ENCODE measurements at regions of chr1 and their contacts with region 1.

Region 1: GRCh38 chr1:47738560-47739182 is 258.5 kb downstream of the TRABD2B start:
- DNase-seq: no peak
- H3K4me3 ChIP-seq: no peak overlapping the region
- H3K27ac ChIP-seq: no peak overlapping the region
- H3K4me1 ChIP-seq: peaks cover 0 to 7% (median 3%) of the 10 kb centered on the region in 4 donors
- H3K27me3 ChIP-seq: peaks cover 0 to 15% (median 3%) of the 10 kb centered on the region in 4 donors
- CTCF ChIP-seq: peak; percentile 67 to 84 (median 77)
- EP300 ChIP-seq: no peak
- POLR2A ChIP-seq: no peak

Region 2: GRCh38 chr1:47997289-47998200 is 258.9 kb after region 1 on chr1 and contains the start of gene TRABD2B:
- intact Hi-C with region 1: loop called (anchors 5 kb)
- DNase-seq: peak; percentile 95
- H3K4me3 ChIP-seq: peak within 1 kb of the TSS; percentile 62 to 90 (median 82)
- H3K27ac ChIP-seq: peak within 1 kb of the TSS; percentile 84 to 87 (median 86)
- H3K4me1 ChIP-seq: peaks cover 9 to 51% (median 44%) of the 10 kb centered on the region in 4 donors
- H3K27me3 ChIP-seq: peaks cover 0 to 14% (median 0%) of the 10 kb centered on the region in 4 donors
- CTCF ChIP-seq: peak in 2 of 3 experiments; percentile 92 to 97
- EP300 ChIP-seq: no peak
- POLR2A ChIP-seq: no peak
- total RNA-seq, gene TRABD2B: 4.0 to 7.6 (median 4.1) TPM

Region 3: GRCh38 chr1:48061162-48062136 is 322.8 kb after region 1 on chr1:
- intact Hi-C with region 1: loop called (anchors 5 kb)
- DNase-seq: no peak
- H3K4me3 ChIP-seq: no peak overlapping the region
- H3K27ac ChIP-seq: no peak overlapping the region
- H3K4me1 ChIP-seq: peaks cover 0 to 20% (median 9%) of the 10 kb centered on the region in 4 donors
- H3K27me3 ChIP-seq: no peaks in the 10 kb centered on the region
- CTCF ChIP-seq: peak; percentile 59 to 73 (median 70)
- EP300 ChIP-seq: no peak
- POLR2A ChIP-seq: no peak

Region 4: DNA sequence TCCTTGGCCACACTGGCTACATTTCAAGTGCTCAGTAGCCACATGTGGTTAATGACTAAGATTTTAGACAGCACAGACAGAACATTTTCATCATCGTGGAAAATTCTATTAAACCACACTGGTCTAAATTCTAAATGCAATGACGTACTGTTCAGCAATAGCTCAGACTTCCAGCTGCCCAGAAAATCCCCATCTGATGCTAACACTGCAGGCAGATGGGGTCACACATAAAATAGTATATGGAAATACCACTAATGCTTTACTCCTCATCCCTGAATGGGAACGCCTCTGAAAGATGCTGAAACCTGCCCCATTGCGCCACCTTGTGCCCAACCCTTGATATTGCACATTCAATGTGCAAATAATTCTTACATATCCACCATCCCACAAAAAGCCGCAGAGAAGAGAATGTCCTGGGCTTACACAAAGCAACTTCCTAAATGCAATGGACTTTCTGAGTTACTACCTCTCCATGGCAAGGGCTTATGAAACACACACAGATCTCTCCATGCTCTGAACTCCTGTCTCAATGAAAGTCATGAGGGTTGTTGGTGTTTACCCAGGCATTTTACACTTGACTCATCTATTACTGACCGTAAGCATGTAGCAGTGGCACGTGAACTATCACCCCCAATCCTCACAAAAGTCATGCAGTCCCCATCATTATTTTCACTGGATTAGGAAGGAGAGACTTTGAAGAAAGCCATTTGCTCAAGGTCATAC is 463.5 kb after region 1 on chr1:
- intact Hi-C with region 1: loop called (anchors 10 kb)
- DNase-seq: no peak
- H3K4me3 ChIP-seq: no peak overlapping the region
- H3K27ac ChIP-seq: no peak overlapping the region
- H3K4me1 ChIP-seq: peaks cover 0 to 59% (median 45%) of the 10 kb centered on the region in 4 donors
- H3K27me3 ChIP-seq: no peaks in the 10 kb centered on the region
- CTCF ChIP-seq: peak; percentile 81 to 89 (median 84)
- EP300 ChIP-seq: no peak
- POLR2A ChIP-seq: no peak

Measured in esophagus muscularis mucosa (tissue), 4 donors.